ENCODE measurements at regions of chr10 and their contacts with region 1.

Region 1: DNA sequence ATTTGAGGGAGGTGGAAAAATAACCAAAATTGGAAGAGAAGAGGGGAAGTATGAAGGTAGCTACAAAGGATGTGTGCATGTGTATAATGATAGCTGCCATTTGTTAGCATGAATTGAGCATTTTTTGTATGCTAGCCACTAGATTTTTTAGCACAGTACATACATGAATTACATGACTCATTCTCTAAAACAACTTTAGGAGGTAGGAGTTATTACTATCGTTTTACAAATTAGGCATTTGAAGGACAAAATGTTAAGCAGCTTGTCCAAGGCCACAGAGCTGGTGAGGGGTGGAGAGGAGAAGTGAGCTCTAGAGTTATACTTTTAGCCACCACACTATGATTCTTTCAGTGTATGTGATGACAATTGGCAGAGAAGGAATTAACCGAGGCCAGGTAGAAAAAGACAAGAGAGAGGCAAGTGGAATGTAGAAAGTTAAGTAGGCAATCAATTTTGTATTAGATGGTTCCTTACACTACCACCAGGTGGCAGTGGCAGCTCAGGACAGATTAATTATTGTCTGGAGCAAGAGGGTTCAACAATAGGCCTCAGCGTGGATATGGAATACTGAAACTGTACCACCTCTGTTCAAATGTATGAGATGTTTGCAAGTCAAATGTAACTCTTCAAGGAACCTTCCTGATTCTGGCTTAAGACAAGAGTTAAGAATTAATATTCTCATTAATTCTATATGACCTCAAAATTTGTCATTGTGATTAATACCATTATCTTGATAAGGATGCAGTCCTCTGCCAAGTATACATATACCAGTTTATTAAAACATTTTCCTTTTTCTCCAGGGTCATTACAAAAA is 128.0 kb downstream of the MBL2 start:
- DNase-seq: peak; percentile 36
- H3K4me3 ChIP-seq: no peak overlapping the region
- H3K27ac ChIP-seq: no peak overlapping the region
- H3K4me1 ChIP-seq: no peaks in the 10 kb centered on the region
- CTCF ChIP-seq: peak; percentile 87

Region 2: DNA sequence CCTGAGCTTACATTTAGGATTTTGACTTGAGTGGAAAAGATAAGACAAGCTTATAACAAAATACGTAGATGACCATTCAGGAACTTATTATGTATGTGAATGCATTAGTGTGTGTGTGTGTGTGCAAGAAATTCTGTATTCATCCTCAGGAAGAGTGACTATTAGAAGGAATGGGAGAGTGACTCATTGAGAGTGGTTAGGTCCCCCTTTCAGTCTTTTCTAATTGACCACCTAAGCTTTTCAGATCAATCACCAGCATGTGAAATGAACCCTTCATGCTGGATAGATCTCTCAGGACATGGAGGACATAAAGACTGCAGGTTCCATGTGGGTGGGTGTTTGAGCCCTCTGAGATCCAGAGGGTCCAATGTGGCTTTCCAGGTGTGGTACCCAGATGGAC is 25.5 kb before region 1 on chr10:
- CTCF ChIA-PET with region 1: no interaction called
- POLR2A ChIA-PET with region 1: no interaction called
- intact Hi-C with region 1: no loop called
- DNase-seq: no peak
- H3K4me3 ChIP-seq: no peak overlapping the region
- H3K27ac ChIP-seq: no peak overlapping the region
- H3K4me1 ChIP-seq: no peaks in the 10 kb centered on the region
- CTCF ChIP-seq: no peak

Region 3: GRCh38 chr10:52729271-52730104 is 84.9 kb after region 1 on chr10:
- CTCF ChIA-PET with region 1: no interaction called
- POLR2A ChIA-PET with region 1: no interaction called
- intact Hi-C with region 1: loop called (anchors 1 kb)
- DNase-seq: peak; percentile 34
- H3K4me3 ChIP-seq: no peak overlapping the region
- H3K27ac ChIP-seq: no peak overlapping the region
- H3K4me1 ChIP-seq: no peaks in the 10 kb centered on the region
- CTCF ChIP-seq: peak; percentile 82

Region 4: GRCh38 chr10:52779541-52780390 is 135.2 kb after region 1 on chr10:
- CTCF ChIA-PET with region 1: no interaction called
- POLR2A ChIA-PET with region 1: interaction called, 3 read pairs
- intact Hi-C with region 1: loop called (anchors 1 kb)
- DNase-seq: peak; percentile 68
- H3K4me3 ChIP-seq: no peak overlapping the region
- H3K27ac ChIP-seq: no peak overlapping the region
- H3K4me1 ChIP-seq: no peaks in the 10 kb centered on the region
- CTCF ChIP-seq: peak; percentile 88